Naive thymus-derived CD8-positive, alpha-beta T cell (primary cell): ENCODE measurements at regions of chr7 and their contacts with region 1.

Region 1: GRCh38 chr7:134458806-134459698 is at the start of gene AKR1B1:
- DNase-seq: peak; percentile 69 to 93 (median 84)
- ATAC-seq: peak; percentile 88 to 90
- H3K4me3 Mint-ChIP-seq: peak within 1 kb of the TSS; percentile 87 to 95 (median 90)
- H3K27ac Mint-ChIP-seq: peak within 1 kb of the TSS; percentile 53 to 95 (median 90)
- H3K4me1 Mint-ChIP-seq: peaks cover 18 to 53% (median 48%) of the 10 kb centered on the region in 4 donors
- H3K27me3 Mint-ChIP-seq: no peaks in the 10 kb centered on the region
- polyA plus RNA-seq, gene AKR1B1: 181 to 202 (median 181) TPM

Region 2: DNA sequence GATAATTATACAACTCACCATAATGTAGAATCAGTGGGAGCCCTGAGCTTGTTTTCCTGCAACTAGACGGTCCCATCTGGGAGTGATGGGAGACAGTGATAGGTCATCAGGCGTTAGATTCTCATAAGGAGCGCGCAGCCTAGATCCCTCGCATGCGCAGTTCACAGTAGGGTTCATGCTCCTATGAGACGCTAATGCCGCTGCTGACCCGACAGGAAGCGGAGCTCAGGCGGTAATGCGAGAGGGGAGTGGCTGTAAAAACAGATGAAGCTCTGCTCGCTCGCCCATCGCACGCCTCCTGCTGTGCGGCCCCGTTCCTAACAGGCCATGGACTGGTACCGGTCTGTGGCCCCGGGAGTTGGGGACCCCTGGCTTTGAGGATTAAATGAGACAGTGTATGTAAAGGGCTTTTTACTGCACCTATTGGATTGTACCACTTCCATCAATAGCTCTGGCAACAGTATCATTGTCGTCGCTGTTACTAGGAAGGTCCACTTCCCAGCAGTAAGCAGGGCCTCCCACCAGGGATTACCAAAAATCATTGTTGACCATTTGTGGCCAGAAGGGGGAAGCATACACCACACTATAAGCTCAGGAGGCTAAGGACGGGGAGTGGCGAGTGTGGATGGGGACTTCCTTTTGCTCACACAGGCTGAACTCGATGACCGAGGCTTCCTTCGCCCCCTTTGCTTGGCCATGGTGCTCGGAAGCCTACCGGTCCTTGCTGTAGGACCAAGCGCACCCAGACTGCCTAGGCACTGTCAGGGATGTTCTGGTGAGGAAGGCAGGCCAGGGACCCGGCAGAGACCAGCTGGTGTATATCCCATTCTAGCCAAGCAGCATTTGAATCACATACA is 26.5 kb before region 1 on chr7:
- POLR2A ChIA-PET with region 1: interaction called, 14 read pairs
- DNase-seq: peak; percentile 33 to 86 (median 67)
- ATAC-seq: peak; percentile 88 to 92
- H3K4me3 Mint-ChIP-seq: peak overlapping the region; percentile 78 to 93 (median 88)
- H3K27ac Mint-ChIP-seq: peak overlapping the region; percentile 81 to 95 (median 87)
- H3K4me1 Mint-ChIP-seq: peaks cover 7 to 22% (median 10%) of the 10 kb centered on the region in 4 donors
- H3K27me3 Mint-ChIP-seq: no peaks in the 10 kb centered on the region